ENCODE measurements at regions of chr6 and their contacts with region 1.

Region 1: DNA sequence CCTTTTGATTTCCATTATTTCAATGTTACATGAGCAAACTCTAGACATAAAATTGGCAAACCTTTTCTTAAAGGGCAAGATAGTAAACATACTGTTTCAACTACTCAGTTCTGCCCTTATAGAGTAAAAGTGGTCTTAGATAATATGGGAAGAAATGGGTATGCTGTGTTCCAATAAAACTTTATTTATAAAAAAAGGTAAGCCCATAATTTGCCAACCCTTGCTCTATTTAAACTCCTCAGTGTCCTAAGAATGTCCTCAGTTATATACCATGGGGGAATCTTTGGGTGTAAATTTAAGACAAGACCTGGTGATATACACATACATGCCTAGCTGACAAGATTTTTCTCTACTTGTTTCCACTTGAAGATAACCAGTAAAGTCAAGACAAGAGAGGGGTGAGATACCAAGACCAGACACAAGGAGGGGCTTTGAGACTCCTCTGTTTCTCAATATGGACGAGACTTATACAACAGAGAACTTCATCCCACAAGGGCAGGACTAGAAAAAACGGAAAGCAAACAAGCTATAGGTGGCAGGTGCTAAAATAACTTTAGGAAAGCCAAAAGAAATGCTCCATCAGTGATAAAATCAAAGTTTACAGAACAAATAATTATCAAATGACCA is 10.5 kb downstream of the SNX3 start:
- DNase-seq: no peak
- ATAC-seq: peak; percentile 65
- H3K4me3 Mint-ChIP-seq: no peak overlapping the region
- H3K27ac Mint-ChIP-seq: peak overlapping the region; percentile 5
- H3K4me1 Mint-ChIP-seq: peaks cover 84% of the 10 kb centered on the region
- H3K27me3 Mint-ChIP-seq: no peaks in the 10 kb centered on the region
- CTCF ChIP-seq: no peak

Region 2: DNA sequence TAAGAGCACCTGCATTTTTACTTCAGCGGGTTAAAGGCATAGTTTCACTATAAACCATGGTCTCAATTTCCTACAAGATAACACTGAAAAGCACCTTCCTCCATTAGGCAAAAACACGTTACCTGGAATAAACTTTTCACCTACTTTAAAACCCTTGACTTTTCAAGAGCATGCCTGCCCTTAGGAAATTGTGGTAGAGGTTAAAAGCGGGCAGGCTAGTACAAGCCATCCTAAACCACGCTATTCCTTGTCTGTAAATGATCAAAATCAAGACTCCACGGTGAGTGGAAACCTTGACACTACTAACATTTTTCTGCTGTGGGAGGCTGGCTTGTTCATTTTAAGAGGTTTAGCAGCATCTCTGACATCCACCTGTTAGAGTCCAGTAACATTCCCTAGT is 40.6 kb before region 1 on chr6:
- CTCF ChIA-PET with region 1: no interaction called
- POLR2A ChIA-PET with region 1: no interaction called
- intact Hi-C with region 1: loop called (anchors 5 kb)
- DNase-seq: no peak
- ATAC-seq: no peak
- H3K4me3 Mint-ChIP-seq: no peak overlapping the region
- H3K27ac Mint-ChIP-seq: no peak overlapping the region
- H3K4me1 Mint-ChIP-seq: no peaks in the 10 kb centered on the region
- H3K27me3 Mint-ChIP-seq: no peaks in the 10 kb centered on the region
- CTCF ChIP-seq: no peak

Region 3: GRCh38 chr6:108288742-108289141 is 38.4 kb after region 1 on chr6:
- CTCF ChIA-PET with region 1: no interaction called
- POLR2A ChIA-PET with region 1: no interaction called
- intact Hi-C with region 1: no loop called
- DNase-seq: no peak
- ATAC-seq: no peak
- H3K4me3 Mint-ChIP-seq: no peak overlapping the region
- H3K27ac Mint-ChIP-seq: no peak overlapping the region
- H3K4me1 Mint-ChIP-seq: peaks cover 9% of the 10 kb centered on the region
- H3K27me3 Mint-ChIP-seq: no peaks in the 10 kb centered on the region
- CTCF ChIP-seq: no peak

Region 4: DNA sequence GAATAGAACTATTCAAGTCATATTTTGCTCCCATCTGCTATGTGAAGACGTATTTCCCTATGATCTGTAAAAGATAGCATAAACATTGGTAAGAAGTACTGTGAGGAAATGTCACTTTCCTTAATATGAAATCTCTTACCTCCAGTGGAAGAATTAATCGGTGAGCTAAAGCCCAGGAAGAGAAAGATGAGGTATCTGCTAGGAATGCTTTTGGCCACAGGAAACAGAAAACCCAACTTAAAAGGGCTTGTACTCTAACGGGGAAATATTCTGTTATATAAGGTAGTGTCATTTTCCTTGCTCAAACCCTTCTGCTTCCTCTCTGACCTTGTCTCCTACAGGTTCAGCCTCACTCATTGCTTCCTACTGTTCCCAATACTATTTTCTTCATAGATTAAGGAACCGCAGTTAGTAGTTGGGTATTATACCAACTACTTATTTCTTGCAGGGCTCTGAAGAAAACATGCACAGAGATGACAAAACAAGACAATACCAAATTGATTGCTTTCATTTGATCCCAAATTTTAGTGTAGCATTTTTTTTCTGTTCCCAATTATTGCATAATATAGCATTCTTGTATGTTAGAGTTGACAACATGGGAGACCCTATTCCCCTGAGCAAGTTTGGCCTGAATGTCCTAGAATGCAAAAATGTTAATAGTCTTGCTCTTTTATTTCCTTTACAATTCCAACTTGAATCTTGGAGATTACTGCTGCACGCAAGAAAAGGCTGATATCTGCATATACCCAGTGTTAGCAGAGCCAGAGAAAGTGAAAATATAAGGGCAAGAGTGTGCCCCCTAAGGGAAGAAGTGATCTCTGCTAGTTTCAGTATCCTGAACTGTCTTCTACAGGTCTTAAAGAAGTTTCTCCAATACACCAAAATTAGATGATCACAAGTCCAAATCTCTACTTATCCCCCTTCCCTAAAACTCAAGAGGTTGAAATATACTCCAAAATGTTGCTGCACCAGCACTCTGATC is 109.8 kb after region 1 on chr6:
- CTCF ChIA-PET with region 1: no interaction called
- POLR2A ChIA-PET with region 1: no interaction called
- intact Hi-C with region 1: loop called (anchors 2 kb)
- DNase-seq: no peak
- ATAC-seq: peak; percentile 62
- H3K4me3 Mint-ChIP-seq: no peak overlapping the region
- H3K27ac Mint-ChIP-seq: no peak overlapping the region
- H3K4me1 Mint-ChIP-seq: peaks cover 7% of the 10 kb centered on the region
- H3K27me3 Mint-ChIP-seq: no peaks in the 10 kb centered on the region
- CTCF ChIP-seq: no peak

Region 5: DNA sequence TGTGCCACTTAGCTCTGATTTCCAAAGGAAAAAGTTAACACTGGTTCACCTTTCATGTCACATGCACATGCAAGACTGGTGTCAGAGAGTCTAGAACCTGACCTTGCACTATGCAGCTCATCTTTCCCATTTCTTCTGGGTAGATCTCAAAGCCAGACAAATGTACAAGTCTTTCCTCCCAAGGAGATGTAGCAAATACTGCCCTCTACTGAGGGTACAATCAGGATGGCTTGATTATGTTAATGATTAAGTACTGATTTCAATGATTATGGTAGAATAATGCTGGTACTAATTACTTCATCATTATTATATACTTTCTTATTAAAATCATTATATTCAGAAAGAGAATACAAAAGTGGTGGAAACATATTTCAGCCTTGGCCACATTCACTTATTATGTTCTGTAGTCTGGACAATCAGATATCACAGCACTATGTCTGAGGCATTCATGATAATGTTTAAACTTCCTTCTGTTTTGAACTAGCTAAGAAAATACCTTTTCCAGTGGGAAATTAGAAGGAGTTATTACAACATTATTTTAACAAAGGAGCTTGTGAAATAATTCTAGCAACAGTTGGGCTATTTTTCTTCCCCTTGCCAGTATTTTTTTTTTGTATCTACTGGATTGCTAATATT is 241.9 kb after region 1 on chr6:
- CTCF ChIA-PET with region 1: interaction called, 33 read pairs
- POLR2A ChIA-PET with region 1: no interaction called
- intact Hi-C with region 1: loop called (anchors 1 kb)
- DNase-seq: no peak
- ATAC-seq: peak; percentile 40
- H3K4me3 Mint-ChIP-seq: no peak overlapping the region
- H3K27ac Mint-ChIP-seq: no peak overlapping the region
- H3K4me1 Mint-ChIP-seq: no peaks in the 10 kb centered on the region
- H3K27me3 Mint-ChIP-seq: no peaks in the 10 kb centered on the region
- CTCF ChIP-seq: no peak

Region 6: GRCh38 chr6:109009236-109009961 is 759.0 kb after region 1 on chr6:
- CTCF ChIA-PET with region 1: no interaction called
- POLR2A ChIA-PET with region 1: no interaction called
- intact Hi-C with region 1: loop called (anchors 10 kb)
- DNase-seq: peak; percentile 87
- ATAC-seq: peak; percentile 97
- H3K4me3 Mint-ChIP-seq: peak overlapping the region; percentile 97
- H3K27ac Mint-ChIP-seq: peak overlapping the region; percentile 95
- H3K4me1 Mint-ChIP-seq: peaks cover 65% of the 10 kb centered on the region
- H3K27me3 Mint-ChIP-seq: no peaks in the 10 kb centered on the region
- CTCF ChIP-seq: no peak